Body of pancreas (tissue), 4 donors: ENCODE measurements at regions of chr16 and their contacts with region 1.

Region 1: DNA sequence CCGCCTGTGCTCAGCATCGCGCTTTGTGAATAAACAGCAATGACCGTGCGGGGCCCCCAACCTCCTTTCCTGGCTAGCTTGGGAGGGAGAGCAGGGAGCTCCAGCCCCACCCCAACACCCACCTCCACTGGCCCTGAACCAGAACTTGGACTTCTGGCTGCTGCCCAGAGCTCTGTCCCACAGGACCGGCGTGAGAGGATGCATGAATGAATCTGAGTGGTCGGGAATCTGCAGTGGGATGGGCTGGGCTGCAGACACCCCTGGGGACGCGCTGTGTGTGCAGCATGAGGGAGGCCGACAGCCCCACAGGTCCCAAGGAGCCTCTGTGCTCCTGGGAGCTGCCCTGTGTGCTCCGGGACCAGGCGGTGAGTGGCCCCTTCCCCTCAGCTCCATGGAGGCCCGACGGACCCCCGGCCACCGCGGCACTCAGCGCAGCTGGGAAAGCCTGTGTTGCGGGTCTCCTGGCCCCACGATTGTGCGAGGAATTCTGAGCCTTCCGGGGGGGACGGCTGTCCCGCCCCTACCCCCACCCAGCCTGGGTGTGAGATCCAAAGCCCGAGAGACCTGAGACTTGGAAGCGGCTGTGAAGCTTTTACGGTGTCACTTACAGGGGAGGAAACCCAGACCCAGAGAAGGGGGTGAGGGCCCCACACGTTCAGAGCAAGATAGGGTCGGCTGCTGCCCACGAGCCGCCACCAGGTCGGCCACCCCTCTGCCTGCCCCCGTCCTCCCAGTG is 5.4 kb downstream of the PIEZO1 start:
- DNase-seq: no peak
- ATAC-seq: no peak
- H3K4me3 ChIP-seq: no peak overlapping the region
- H3K27ac ChIP-seq: no peak overlapping the region
- H3K4me1 ChIP-seq: peaks cover 31% of the 10 kb centered on the region
- H3K27me3 ChIP-seq: no peaks in the 10 kb centered on the region
- CTCF ChIP-seq: no peak
- POLR2A ChIP-seq: no peak

Region 2: DNA sequence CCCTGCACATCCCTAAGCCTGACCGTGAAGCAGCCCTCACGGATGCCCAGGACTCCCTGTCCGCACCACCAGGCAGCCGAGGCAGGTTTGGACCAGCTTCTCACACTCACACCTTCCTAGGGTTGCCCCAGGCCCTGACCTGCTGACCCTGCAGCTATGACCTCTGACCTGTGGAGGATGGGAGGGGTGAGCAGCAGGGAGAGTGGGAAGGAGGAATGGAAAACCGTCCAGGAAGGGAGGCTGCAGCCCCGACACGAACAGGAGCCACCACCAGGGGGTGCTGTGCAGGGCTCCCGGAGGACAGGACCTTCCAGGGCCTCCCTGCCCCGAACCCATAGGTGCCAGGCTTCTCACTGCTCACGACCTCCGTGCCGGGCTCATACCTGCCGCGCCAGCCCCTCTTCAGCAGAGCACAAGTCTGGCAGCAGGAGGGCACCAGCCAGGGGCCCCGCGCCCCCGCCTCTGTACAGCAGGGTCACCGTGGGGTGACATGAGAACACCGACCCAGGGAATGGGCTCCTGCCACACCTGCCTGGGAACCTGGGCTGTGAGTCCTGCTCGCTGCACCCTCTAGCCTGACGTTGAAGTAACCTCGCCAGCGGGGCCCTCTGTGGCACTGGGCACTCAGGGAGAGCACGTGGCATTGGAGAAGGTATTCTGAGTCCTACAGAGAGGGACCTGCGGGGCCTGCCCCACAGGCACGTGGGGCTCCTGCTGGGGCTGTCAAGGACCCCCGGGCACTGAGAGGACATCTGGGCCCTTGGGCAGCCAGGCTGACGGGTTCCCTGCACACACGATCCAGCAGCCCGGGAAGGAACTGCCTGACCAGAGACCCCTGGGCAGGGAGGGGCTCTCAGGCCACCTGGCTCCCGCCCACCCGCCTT is 35.6 kb before region 1 on chr16:
- intact Hi-C with region 1: loop called (anchors 5 kb)
- DNase-seq: peak; percentile 77 to 86 (median 84)
- ATAC-seq: peak; percentile 81
- H3K4me3 ChIP-seq: no peak overlapping the region
- H3K27ac ChIP-seq: no peak overlapping the region
- H3K4me1 ChIP-seq: peaks cover 9% of the 10 kb centered on the region
- H3K27me3 ChIP-seq: no peaks in the 10 kb centered on the region
- CTCF ChIP-seq: peak; percentile 81 to 89 (median 86)
- POLR2A ChIP-seq: no peak

Region 3: DNA sequence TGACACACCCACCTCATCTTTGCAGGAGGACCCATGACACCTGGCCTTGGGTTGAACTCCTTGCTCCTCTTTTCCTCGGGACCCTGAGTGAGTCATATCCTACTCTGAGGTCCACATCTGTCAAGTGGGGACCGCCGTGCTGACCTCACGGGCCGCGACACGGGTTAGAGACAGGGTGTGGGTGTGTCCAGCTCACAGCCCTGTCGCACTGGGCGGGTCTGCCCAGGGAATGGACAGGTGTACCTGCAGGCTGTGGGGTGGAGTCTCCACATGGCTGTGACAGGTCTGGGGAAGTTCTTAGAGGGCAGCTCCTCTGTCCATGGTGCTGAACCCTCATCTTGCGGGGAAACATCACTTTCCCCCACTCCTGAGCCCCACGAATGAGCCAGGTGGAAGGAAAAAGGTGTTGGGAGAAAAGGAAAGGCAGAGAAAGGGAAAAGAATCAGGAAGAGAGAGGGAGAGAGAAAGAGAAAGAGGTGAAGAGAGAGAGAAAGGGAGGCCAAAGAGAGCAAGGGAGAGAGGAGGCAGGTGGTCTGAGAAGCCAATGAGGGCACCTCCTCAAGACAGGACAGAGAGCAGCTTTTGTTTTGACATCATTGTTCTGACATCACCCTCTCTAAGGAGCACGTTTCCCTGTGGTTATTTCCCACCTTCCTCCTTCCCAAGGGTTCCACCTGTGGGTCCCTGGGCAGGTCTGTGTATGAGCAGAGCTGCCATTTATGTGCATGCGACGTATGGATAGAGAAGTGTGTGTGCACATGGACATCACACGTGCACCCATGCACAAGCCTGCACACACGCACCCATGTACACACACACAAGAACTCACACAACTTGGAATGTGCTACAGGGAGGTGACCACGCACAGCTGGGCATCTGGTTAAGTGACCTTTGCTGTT is 230.0 kb after region 1 on chr16:
- intact Hi-C with region 1: no loop called
- DNase-seq: peak; percentile 20 to 47 (median 32)
- ATAC-seq: no peak
- H3K4me3 ChIP-seq: no peak overlapping the region
- H3K27ac ChIP-seq: no peak overlapping the region
- H3K4me1 ChIP-seq: no peaks in the 10 kb centered on the region
- H3K27me3 ChIP-seq: no peaks in the 10 kb centered on the region
- CTCF ChIP-seq: no peak
- POLR2A ChIP-seq: no peak